Naive thymus-derived CD4-positive, alpha-beta T cell (primary cell): ENCODE measurements at regions of chr6 and their contacts with region 1.

Region 1: DNA sequence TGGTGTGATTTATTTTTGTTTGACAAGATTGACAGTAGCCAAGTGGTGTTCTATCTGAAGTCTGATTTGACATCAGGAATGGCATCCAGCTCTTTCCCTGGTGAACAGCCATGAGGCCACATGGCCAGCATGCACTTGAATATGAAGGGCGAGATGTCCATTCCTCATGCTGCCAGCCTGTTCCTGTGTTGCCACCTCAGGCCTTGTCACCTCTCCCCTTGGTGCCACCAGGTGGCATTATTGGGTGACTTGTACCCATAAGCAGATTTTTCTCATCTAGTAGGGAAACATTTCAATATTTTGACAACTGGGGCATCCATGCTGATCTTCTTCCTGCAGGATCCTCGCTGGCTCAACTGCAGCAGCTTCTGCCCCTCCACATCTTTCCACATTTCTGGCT is 199.1 kb downstream of the ERMARD start:
- DNase-seq: peak in 5 of 9 donors; percentile 15 to 44 (median 31)
- ATAC-seq: peak; percentile 41
- H3K4me3 ChIP-seq: no peak overlapping the region
- H3K4me3 Mint-ChIP-seq: no peak overlapping the region
- H3K27ac ChIP-seq: no peak overlapping the region
- H3K27ac Mint-ChIP-seq: no peak overlapping the region
- H3K4me1 ChIP-seq: no peaks in the 10 kb centered on the region
- H3K4me1 Mint-ChIP-seq: no peaks in the 10 kb centered on the region
- H3K27me3 ChIP-seq: peaks cover 0 to 2% of the 10 kb centered on the region in 2 donors
- H3K27me3 Mint-ChIP-seq: peaks cover 0 to 19% (median under 1%) of the 10 kb centered on the region in 5 donors

Region 2: DNA sequence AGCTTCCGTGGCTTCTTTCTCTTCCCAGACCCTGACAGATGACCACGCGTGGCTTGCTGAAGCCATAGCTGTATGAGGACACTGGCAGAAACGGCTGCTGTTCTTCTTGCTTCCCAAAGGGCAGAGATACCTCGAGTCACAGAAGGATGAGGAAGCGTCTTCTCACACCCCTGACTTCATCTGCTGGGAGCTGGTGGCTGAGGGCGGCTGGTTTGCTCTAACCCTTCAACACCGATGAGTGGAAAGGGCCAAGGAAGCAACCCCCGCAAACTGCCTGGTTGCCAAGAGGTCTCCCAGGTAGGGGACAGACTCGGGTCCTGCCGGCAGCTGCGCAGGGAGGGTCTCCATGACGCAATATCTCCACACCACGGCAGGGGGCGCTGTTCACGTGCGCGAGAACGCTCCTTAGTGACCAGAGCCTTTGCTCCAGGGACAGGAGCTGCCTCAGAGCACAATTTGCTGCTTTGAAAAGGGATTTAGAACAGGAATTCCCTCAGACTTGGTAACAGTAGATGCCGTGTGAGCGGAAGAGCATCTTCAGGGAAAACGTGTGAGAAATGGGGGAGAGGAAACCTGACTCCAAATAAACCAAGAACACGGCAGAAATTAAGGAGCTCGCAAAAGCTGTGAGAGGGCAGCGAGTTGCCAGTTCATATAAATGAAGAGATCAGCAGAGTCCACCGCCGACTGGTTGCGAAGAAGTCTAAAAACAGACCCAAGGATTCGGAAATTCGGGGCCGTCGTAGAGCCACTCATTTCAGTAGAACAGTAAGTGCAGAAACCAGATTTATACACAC is 118.9 kb before region 1 on chr6:
- CTCF ChIA-PET with region 1: no interaction called
- POLR2A ChIA-PET with region 1: no interaction called
- intact Hi-C with region 1: loop called in 1 of 2 experiments (anchors 5 kb)
- DNase-seq: peak; percentile 34 to 73 (median 62)
- ATAC-seq: peak; percentile 76
- H3K4me3 ChIP-seq: no peak overlapping the region
- H3K4me3 Mint-ChIP-seq: no peak overlapping the region
- H3K27ac ChIP-seq: no peak overlapping the region
- H3K27ac Mint-ChIP-seq: peak overlapping the region in 1 of 9 donors; percentile 21
- H3K4me1 ChIP-seq: no peaks in the 10 kb centered on the region
- H3K4me1 Mint-ChIP-seq: peaks cover 0 to 8% (median 4%) of the 10 kb centered on the region in 7 donors
- H3K27me3 ChIP-seq: no peaks in the 10 kb centered on the region
- H3K27me3 Mint-ChIP-seq: peaks cover 41 to 59% (median 47%) of the 10 kb centered on the region in 5 donors

Region 3: GRCh38 chr6:169868458-169868857 is 82.1 kb before region 1 on chr6:
- CTCF ChIA-PET with region 1: interaction called, 13 read pairs
- POLR2A ChIA-PET with region 1: no interaction called
- intact Hi-C with region 1: no loop called
- DNase-seq: peak in 7 of 9 donors; percentile 8 to 62 (median 52)
- ATAC-seq: peak; percentile 78
- H3K4me3 ChIP-seq: no peak overlapping the region
- H3K4me3 Mint-ChIP-seq: peak overlapping the region in 5 of 10 donors; percentile 32 to 58 (median 46)
- H3K27ac ChIP-seq: no peak overlapping the region
- H3K27ac Mint-ChIP-seq: peak overlapping the region in 2 of 9 donors; percentile 29 to 66
- H3K4me1 ChIP-seq: peaks cover 8 to 12% of the 10 kb centered on the region in 2 donors
- H3K4me1 Mint-ChIP-seq: peaks cover 0 to 33% (median 8%) of the 10 kb centered on the region in 7 donors
- H3K27me3 ChIP-seq: no peaks in the 10 kb centered on the region
- H3K27me3 Mint-ChIP-seq: peaks cover 0 to 4% (median 0%) of the 10 kb centered on the region in 5 donors

Region 4: DNA sequence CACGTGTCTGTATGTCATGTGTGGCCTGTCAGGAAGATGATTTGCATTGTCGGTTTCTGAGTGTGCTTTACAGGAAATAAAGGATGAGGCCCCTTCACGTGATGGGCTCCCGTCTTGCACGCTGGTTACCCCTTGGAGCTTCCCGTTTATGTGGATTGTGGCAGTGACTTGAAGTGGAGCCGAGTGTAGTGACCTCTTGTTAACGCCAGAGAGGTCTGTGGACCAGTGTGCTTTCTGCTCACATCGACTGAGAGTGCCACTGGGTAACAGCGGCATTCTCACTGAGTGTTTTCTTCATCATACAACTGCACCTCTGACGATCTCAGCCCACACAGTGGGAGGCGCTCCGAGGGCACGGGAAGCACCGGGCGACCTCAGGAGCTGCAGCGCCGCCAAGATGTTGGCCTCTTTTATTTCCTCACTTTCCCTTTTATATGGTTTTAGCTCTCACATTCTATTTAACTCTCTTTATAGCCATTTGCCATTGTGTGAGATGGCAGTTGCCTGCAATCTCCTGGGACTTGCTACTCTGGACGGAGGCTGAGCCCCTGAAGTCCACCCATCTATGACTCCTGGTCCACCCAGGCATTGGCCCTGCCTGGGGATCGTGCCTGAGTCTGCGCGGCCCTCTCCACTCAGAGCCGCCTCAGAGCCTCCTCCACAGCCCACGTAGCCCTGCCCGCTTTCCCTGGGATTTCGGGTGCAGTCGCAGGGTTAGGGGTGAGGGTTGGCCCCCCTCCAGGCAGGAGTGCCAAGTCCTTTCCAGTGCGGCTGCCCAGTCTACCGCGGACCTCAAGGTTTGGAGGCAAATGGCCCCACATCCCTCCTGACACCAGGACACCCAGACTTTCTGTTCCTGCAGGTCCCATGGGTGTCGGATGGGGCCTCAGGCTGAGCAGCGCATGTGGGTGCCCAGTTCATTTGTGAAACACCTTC is 39.8 kb after region 1 on chr6:
- CTCF ChIA-PET with region 1: no interaction called
- POLR2A ChIA-PET with region 1: no interaction called
- intact Hi-C with region 1: loop called in 1 of 2 experiments (anchors 2 kb)
- DNase-seq: peak in 8 of 9 donors; percentile 24 to 57 (median 49)
- ATAC-seq: peak; percentile 85
- H3K4me3 ChIP-seq: peak overlapping the region; percentile 30
- H3K4me3 Mint-ChIP-seq: peak overlapping the region; percentile 63 to 85 (median 76)
- H3K27ac ChIP-seq: peak overlapping the region; percentile 29
- H3K27ac Mint-ChIP-seq: peak overlapping the region; percentile 1 to 83 (median 78)
- H3K4me1 ChIP-seq: peaks cover 0 to 18% of the 10 kb centered on the region in 2 donors
- H3K4me1 Mint-ChIP-seq: peaks cover 22 to 29% (median 26%) of the 10 kb centered on the region in 7 donors
- H3K27me3 ChIP-seq: no peaks in the 10 kb centered on the region
- H3K27me3 Mint-ChIP-seq: no peaks in the 10 kb centered on the region

Region 5: GRCh38 chr6:170516783-170517616 is 566.4 kb after region 1 on chr6:
- CTCF ChIA-PET with region 1: no interaction called
- POLR2A ChIA-PET with region 1: no interaction called
- intact Hi-C with region 1: loop called (anchors 1 kb)
- DNase-seq: peak; percentile 9 to 56 (median 45)
- ATAC-seq: peak; percentile 90
- H3K4me3 ChIP-seq: peak overlapping the region; percentile 45
- H3K4me3 Mint-ChIP-seq: peak overlapping the region in 8 of 10 donors; percentile 35 to 78 (median 60)
- H3K27ac ChIP-seq: no peak overlapping the region
- H3K27ac Mint-ChIP-seq: peak overlapping the region in 1 of 9 donors; percentile 13
- H3K4me1 ChIP-seq: peaks cover 0 to 3% of the 10 kb centered on the region in 2 donors
- H3K4me1 Mint-ChIP-seq: peaks cover 0 to 2% (median 0%) of the 10 kb centered on the region in 7 donors
- H3K27me3 ChIP-seq: no peaks in the 10 kb centered on the region
- H3K27me3 Mint-ChIP-seq: peaks cover 12 to 70% (median 40%) of the 10 kb centered on the region in 5 donors

Region 6: GRCh38 chr6:170529839-170530469 is 579.4 kb after region 1 on chr6:
- CTCF ChIA-PET with region 1: interaction called, 8 read pairs
- POLR2A ChIA-PET with region 1: no interaction called
- intact Hi-C with region 1: loop called (anchors 1 kb)
- DNase-seq: peak; percentile 33 to 64 (median 51)
- ATAC-seq: peak; percentile 90
- H3K4me3 ChIP-seq: no peak overlapping the region
- H3K4me3 Mint-ChIP-seq: no peak overlapping the region
- H3K27ac ChIP-seq: no peak overlapping the region
- H3K27ac Mint-ChIP-seq: peak overlapping the region in 4 of 9 donors; percentile 8 to 51 (median 26)
- H3K4me1 ChIP-seq: no peaks in the 10 kb centered on the region
- H3K4me1 Mint-ChIP-seq: peaks cover 0 to 8% (median 0%) of the 10 kb centered on the region in 7 donors
- H3K27me3 ChIP-seq: no peaks in the 10 kb centered on the region
- H3K27me3 Mint-ChIP-seq: peaks cover 0 to 7% (median 0%) of the 10 kb centered on the region in 5 donors